Activated CD4-positive, alpha-beta T cell treated with anti-CD3 and anti-CD28 coated beads, Interleukin-2, amount 10 ng/mL, durations not matched to agents 24 days and 14 days (primary cell): ENCODE measurements at regions of chr2 and their contacts with region 1.

Region 1: DNA sequence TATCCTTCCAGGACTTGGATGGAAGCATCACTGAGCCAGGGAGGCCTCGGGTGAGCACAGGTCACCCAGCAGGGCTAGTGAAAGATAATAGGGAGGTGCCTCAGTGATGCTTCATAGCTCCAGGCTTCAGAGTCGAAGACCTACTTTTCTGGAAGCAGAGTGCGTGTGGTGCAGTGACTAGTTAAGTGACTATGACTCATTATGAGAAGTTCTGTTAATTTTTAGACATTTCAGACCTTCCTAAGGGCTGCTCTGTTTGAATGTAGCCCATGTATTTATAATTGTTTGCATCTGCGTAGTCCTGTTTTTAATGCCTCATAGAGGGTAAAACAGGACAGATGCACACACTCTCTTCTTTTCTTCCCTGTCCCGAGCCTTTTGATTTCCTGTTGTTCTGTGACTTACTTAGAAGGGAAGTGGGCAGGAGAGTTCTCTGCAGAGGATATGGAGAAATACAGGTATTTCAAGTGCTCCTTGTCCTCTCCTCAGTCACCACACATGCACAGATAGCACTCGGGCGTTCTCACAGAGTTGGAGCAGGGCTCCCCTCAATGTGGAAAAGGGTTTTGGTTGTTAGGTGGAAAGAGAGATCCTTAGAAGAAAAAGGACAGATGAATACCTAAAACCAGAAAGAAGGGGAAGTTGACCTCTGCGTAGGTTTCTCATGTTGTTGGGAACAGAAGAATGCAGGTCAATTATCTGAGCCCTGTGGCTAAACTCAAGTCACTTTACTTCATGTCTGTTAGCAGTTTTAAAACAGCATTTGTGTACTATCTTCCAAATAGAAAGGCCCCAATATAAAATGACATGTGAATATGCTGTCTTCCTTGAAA is 34.7 kb downstream of the RALB start:
- DNase-seq: peak; percentile 73
- H3K4me3 Mint-ChIP-seq: peak overlapping the region; percentile 66
- H3K27ac Mint-ChIP-seq: peak overlapping the region; percentile 89
- H3K4me1 Mint-ChIP-seq: peaks cover 63% of the 10 kb centered on the region
- H3K27me3 Mint-ChIP-seq: no peaks in the 10 kb centered on the region

Region 2: DNA sequence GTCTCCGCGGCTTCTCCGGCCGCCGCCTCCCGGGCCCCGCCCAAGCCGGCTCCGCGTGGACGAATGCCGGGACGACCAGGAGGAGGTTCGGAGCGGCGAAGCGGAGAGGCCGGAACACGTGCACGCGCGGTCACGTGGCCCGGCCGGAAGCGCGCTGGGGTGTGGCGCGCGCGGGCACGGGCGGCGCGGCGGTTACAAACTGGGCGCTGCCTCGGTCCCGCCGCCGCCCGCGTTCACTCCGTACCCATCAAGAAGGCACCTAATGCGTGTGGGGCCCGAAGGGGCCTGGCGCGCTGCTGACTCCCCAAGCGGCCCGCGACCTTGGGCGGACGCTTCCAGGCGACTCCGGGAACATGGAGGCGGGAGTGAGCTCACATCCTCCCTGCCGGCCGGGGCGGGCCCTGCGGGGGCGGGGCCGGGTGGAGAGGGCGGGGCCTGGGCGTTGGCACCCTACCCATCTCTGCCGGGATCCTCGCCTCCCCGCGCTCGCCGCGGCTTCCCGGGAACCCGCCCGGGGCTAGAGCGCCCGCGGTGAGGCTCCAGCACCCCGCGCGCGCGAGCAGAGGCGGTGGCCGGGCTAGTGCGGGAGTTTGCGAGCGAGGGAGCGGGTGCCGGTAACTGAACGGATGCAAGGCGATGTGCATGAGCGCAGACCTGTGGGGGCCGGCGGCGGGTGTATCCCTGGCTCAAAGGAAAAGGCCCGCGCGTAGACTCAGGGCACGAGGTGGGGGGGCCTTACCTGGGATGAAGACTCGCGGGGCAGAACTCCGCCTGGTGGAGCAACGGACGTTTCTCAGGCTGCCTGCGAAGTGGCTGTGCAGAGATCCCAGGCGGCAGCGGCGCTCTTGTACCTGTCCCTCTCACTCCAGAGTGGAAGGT is 64.1 kb before region 1 on chr2 and contains the start of gene TMEM185B:
- intact Hi-C with region 1: loop called (anchors 2 kb)
- DNase-seq: peak; percentile 98
- H3K4me3 Mint-ChIP-seq: peak within 1 kb of the TSS; percentile 87
- H3K27ac Mint-ChIP-seq: peak within 1 kb of the TSS; percentile 92
- H3K4me1 Mint-ChIP-seq: peaks cover 59% of the 10 kb centered on the region
- H3K27me3 Mint-ChIP-seq: no peaks in the 10 kb centered on the region
- total RNA-seq, gene TMEM185B: 44.3 and 45.8 TPM in 2 replicates

Region 3: GRCh38 chr2:120261387-120262006 is 25.9 kb before region 1 on chr2:
- intact Hi-C with region 1: loop called (anchors 2 kb)
- DNase-seq: peak; percentile 87
- H3K4me3 Mint-ChIP-seq: no peak overlapping the region
- H3K27ac Mint-ChIP-seq: no peak overlapping the region
- H3K4me1 Mint-ChIP-seq: peaks cover 32% of the 10 kb centered on the region
- H3K27me3 Mint-ChIP-seq: no peaks in the 10 kb centered on the region